ENCODE measurements at regions of chrX and their contacts with region 1.

Region 1: DNA sequence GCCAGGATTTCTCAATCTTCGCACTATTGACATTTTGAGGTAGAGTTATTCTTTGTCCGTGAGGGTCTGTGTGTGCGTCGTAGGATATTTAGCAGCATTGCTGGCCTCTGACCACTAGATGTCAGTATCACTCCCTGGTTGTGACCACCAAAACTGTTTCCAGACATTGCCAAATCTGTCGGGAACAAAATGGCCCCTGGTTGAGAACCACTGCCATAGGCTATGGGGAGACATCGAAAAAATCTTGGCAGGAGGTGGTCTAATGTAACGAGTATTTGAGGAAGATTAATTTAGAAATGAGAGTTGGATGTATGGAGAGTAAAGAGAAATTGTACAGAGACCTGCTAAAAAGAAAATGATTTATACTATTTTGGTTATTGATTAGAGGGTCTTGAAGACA is 108.4 kb downstream of the DOCK11 start:
- DNase-seq: no peak
- H3K4me3 ChIP-seq: no peak overlapping the region
- H3K27me3 ChIP-seq: no peaks in the 10 kb centered on the region
- CTCF ChIP-seq: peak; percentile 68

Region 2: DNA sequence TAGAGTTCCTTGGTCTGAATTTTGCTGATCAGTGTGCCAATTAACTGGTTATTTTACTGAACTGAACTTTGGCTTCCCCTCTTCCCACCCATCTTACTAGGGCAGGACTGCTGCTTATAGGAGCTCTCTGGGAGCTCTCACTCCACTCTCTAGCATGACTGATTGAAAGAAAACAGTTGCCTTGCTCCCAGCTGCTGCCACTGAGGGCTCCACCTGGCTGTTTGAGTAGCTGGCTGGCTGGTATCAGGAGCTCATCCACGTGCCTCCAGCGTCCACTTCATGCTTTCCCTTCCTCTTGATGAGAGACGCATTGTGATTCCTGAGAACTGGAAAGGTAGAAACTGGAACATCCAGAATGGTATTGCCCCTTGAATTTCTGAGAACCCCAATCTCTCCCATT is 414.4 kb before region 1 on chrX:
- CTCF ChIA-PET with region 1: no interaction called
- POLR2A ChIA-PET with region 1: no interaction called
- DNase-seq: no peak
- H3K4me3 ChIP-seq: no peak overlapping the region
- H3K27me3 ChIP-seq: no peaks in the 10 kb centered on the region
- CTCF ChIP-seq: no peak

Region 3: DNA sequence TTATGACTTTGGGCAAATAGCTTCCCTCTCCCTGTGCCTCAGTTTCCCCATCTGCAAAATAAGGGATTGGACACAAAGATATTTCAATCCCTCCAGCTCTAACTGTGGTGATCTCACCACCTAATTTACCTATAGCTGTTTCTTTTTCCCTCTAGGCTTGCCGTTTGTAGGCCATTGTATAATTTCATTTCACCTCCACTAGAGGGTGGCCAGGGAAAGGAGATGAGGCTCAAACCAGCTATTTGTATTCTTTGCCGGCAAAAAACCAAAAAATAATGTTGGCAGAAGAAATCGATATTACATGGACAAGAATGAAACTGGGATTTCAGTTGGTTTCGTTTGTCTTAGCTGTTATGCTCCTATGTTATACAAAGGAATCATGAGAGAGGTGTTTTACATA is 144.5 kb before region 1 on chrX:
- CTCF ChIA-PET with region 1: interaction called, 49 read pairs
- POLR2A ChIA-PET with region 1: no interaction called
- DNase-seq: no peak
- H3K4me3 ChIP-seq: no peak overlapping the region
- H3K27me3 ChIP-seq: no peaks in the 10 kb centered on the region
- CTCF ChIP-seq: peak; percentile 61

Measured in BJ (cell line).